ENCODE measurements at regions of chr4 and their contacts with region 1.

Region 1: DNA sequence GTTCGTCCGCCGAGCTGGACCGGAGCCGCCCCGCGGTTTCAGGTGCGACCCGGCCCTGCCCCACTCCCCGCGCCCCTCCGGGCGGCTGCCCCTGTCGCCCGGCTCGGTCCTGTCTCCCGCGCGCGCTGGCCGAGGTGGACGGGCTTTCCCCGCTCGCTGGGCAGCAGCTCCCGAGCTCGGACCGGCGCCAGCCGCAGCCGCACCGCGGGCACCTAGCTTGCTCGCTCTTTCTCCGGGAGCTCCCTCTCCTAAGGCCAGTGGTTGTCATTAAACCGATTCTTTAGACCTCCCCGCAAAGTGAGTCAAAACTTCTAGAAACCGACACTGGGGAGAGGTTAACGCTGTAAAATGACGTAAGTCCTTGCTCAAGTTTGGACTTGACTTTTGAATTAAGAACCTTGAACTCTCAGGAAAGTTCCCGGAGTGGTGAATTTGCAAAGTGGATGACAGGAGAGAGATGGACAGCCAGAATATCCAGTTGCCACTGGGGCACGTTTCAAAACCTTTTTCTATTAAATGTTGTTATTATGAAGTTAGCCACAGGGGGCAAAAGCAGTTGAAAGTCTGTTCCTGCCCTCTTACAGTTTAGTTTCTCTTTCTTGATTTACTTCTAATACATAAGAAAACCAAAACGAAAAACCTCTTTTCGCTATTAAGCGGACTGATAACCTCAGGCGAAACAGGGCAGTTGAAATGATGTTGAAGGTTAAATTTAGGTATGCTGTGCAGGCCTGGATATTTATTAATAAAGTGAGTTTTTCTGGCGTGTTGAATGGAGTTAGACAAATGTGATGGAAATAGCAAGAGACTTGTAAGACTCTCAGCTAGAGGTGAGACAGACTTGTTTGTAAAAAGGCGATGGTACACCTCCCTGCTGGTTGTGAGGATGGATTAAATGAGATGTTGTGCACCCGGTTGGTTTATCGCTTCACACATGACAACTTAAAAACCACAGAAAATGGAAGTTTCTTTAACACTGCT is 847 bp downstream of the PI4K2B start:
- DNase-seq: peak; percentile 69
- H3K4me3 ChIP-seq: peak overlapping the region; percentile 79 to 97 (median 87)
- H3K27ac ChIP-seq: peak overlapping the region; percentile 92 to 97 (median 95)
- H3K4me1 ChIP-seq: peaks cover 0 to 10% (median 4%) of the 10 kb centered on the region in 4 donors
- H3K27me3 ChIP-seq: no peaks in the 10 kb centered on the region
- CTCF ChIP-seq: peak in 3 of 4 experiments; percentile 36 to 55 (median 48)
- EP300 ChIP-seq: no peak
- POLR2A ChIP-seq: no peak

Region 2: GRCh38 chr4:24589448-24589847 is 645.2 kb before region 1 on chr4:
- intact Hi-C with region 1: loop called (anchors 5 kb)
- DNase-seq: no peak
- H3K4me3 ChIP-seq: no peak overlapping the region
- H3K27ac ChIP-seq: no peak overlapping the region
- H3K4me1 ChIP-seq: peaks cover 0 to 7% (median 0%) of the 10 kb centered on the region in 4 donors
- H3K27me3 ChIP-seq: no peaks in the 10 kb centered on the region
- CTCF ChIP-seq: no peak
- EP300 ChIP-seq: no peak
- POLR2A ChIP-seq: no peak

Region 3: GRCh38 chr4:24701683-24702082 is 533.0 kb before region 1 on chr4:
- intact Hi-C with region 1: no loop called
- DNase-seq: no peak
- H3K4me3 ChIP-seq: no peak overlapping the region
- H3K27ac ChIP-seq: no peak overlapping the region
- H3K4me1 ChIP-seq: no peaks in the 10 kb centered on the region
- H3K27me3 ChIP-seq: no peaks in the 10 kb centered on the region
- CTCF ChIP-seq: no peak
- EP300 ChIP-seq: no peak
- POLR2A ChIP-seq: no peak

Region 4: GRCh38 chr4:24794916-24795665 is 439.6 kb before region 1 on chr4 and contains the start of gene SOD3:
- intact Hi-C with region 1: loop called (anchors 10 kb)
- DNase-seq: peak; percentile 95
- H3K4me3 ChIP-seq: peak within 1 kb of the TSS; percentile 5 to 47 (median 37)
- H3K27ac ChIP-seq: peak within 1 kb of the TSS; percentile 80 to 89 (median 86)
- H3K4me1 ChIP-seq: peaks cover 0 to 42% (median 31%) of the 10 kb centered on the region in 4 donors
- H3K27me3 ChIP-seq: peaks cover 0 to 9% (median 0%) of the 10 kb centered on the region in 3 donors
- CTCF ChIP-seq: no peak
- EP300 ChIP-seq: no peak
- POLR2A ChIP-seq: peak in 1 of 2 donors; percentile 69
- total RNA-seq, gene SOD3: 45.3 to 164 (median 95.4) TPM

Region 5: DNA sequence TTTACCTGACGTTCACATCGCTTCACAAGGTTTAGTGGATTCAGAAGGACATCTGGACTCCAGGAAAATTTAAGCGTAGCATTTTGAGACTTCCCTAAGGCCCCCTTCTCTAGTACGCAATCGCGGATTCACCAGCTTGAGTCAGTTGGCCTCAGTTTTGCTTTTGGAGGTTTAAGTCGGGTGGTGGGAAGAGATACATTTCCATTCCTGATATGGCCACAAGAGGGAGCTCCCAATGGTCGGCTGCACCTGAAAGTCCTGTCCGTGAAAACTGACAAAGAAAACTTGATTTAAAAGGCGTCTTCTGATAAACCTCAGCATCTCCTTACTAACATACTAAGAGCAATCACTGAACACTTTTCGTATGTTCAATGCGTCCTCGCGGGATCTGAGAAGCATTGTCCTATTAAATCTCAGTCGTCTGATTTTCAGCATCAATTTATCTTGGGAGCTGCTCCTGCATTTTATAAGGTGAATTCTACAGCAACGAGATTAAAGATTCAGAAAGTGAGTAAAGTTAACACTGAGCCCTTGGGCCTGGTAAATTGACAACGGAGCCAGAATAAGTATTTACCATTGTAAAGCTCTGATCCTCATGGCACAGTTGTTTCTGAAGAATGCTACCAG is 254.5 kb before region 1 on chr4:
- intact Hi-C with region 1: no loop called
- DNase-seq: peak; percentile 83
- H3K4me3 ChIP-seq: peak overlapping the region in 3 of 4 donors; percentile 18 to 27 (median 21)
- H3K27ac ChIP-seq: peak overlapping the region; percentile 51 to 68 (median 54)
- H3K4me1 ChIP-seq: peaks cover 0 to 12% (median 7%) of the 10 kb centered on the region in 4 donors
- H3K27me3 ChIP-seq: no peaks in the 10 kb centered on the region
- CTCF ChIP-seq: peak; percentile 56 to 86 (median 76)
- EP300 ChIP-seq: no peak
- POLR2A ChIP-seq: no peak

Region 6: GRCh38 chr4:25159884-25160713 is 74.6 kb before region 1 on chr4 and contains the start of gene SEPSECS:
- intact Hi-C with region 1: loop called (anchors 2 kb)
- DNase-seq: peak; percentile 99
- H3K4me3 ChIP-seq: peak within 1 kb of the TSS; percentile 72 to 91 (median 86)
- H3K27ac ChIP-seq: peak within 1 kb of the TSS; percentile 91 to 98 (median 97)
- H3K4me1 ChIP-seq: peaks cover 0 to 23% (median 16%) of the 10 kb centered on the region in 4 donors
- H3K27me3 ChIP-seq: no peaks in the 10 kb centered on the region
- CTCF ChIP-seq: no peak
- EP300 ChIP-seq: no peak
- POLR2A ChIP-seq: peak in 1 of 2 donors; percentile 79
- total RNA-seq, gene SEPSECS: 7.9 to 10.0 (median 8.6) TPM

Region 7: DNA sequence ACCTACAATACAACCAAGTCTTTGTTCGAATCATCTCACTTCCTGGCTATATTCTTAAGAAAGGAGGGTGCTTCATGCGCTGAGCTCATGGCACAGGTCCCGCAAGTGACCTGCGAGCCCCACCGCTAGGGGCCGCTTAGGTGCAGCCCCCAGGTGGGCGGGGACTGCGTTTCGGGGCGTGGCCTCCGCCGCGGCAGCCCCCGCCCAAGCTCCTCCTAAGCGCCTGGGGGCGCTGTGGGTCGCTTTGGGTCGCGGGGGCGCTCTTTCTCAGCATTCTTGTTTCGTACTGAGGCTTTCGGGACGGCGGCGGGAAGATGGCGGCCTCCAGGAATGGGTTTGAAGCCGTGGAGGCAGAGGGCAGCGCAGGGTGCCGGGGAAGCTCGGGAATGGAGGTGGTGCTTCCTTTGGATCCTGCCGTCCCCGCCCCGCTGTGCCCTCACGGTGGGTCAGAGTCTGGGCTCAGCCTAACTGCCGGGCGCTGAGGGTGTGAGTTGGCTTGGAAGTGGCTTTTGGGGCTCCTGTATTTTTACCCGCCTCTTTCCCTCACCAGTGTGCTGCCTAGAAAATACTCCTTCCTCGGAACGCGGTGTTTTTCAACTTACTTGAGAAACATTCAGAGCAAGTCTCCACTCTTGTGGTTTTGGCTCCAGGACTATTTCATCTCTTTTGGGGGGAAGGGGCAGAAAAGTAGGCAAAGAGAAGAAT is 78.0 kb after region 1 on chr4 and contains the start of gene ZCCHC4:
- intact Hi-C with region 1: loop called (anchors 2 kb)
- DNase-seq: peak; percentile 93
- H3K4me3 ChIP-seq: peak within 1 kb of the TSS; percentile 47 to 76 (median 70)
- H3K27ac ChIP-seq: peak within 1 kb of the TSS; percentile 62 to 83 (median 80)
- H3K4me1 ChIP-seq: peaks cover 0 to 9% (median 8%) of the 10 kb centered on the region in 4 donors
- H3K27me3 ChIP-seq: no peaks in the 10 kb centered on the region
- CTCF ChIP-seq: peak; percentile 53 to 99 (median 84)
- EP300 ChIP-seq: no peak
- POLR2A ChIP-seq: no peak
- total RNA-seq, gene ZCCHC4: 9.1 to 21.8 (median 17.8) TPM

Region 8: GRCh38 chr4:25376754-25377571 is 142.3 kb after region 1 on chr4 and contains the start of gene ANAPC4:
- intact Hi-C with region 1: loop called (anchors 5 kb)
- DNase-seq: peak; percentile 98
- H3K4me3 ChIP-seq: peak within 1 kb of the TSS; percentile 67 to 94 (median 74)
- H3K27ac ChIP-seq: peak within 1 kb of the TSS; percentile 77 to 83 (median 80)
- H3K4me1 ChIP-seq: peaks cover 0 to 22% (median 19%) of the 10 kb centered on the region in 4 donors
- H3K27me3 ChIP-seq: no peaks in the 10 kb centered on the region
- CTCF ChIP-seq: peak in 2 of 4 experiments; percentile 13 to 14
- EP300 ChIP-seq: peak in 1 of 4 donors; percentile 6
- POLR2A ChIP-seq: peak in 1 of 2 donors; percentile 57
- total RNA-seq, gene ANAPC4: 31.4 to 75.1 (median 34.5) TPM